Activated naive CD4-positive, alpha-beta T cell treated with anti-CD3 and anti-CD28 coated beads for 36 hours (primary cell): ENCODE measurements at regions of chr11 and their contacts with region 1.

Region 1: GRCh38 chr11:119205574-119206510 is at the start of gene CBL:
- DNase-seq: peak; percentile 99
- H3K4me3 Mint-ChIP-seq: peak within 1 kb of the TSS; percentile 93
- H3K27ac Mint-ChIP-seq: peak within 1 kb of the TSS; percentile 88
- H3K4me1 Mint-ChIP-seq: peaks cover 29% of the 10 kb centered on the region
- H3K27me3 Mint-ChIP-seq: no peaks in the 10 kb centered on the region
- total RNA-seq, gene CBL: 25.3 to 25.7 TPM

Region 2: GRCh38 chr11:117327567-117328374 is 1878.1 kb before region 1 on chr11 and contains the start of gene CEP164:
- CTCF ChIA-PET with region 1: no interaction called
- intact Hi-C with region 1: loop called (anchors 5 kb)
- DNase-seq: peak; percentile 97
- H3K4me3 Mint-ChIP-seq: peak within 1 kb of the TSS; percentile 61
- H3K27ac Mint-ChIP-seq: peak within 1 kb of the TSS; percentile 71
- H3K4me1 Mint-ChIP-seq: peaks cover 3% of the 10 kb centered on the region
- H3K27me3 Mint-ChIP-seq: no peaks in the 10 kb centered on the region
- total RNA-seq, gene CEP164: 23.9 to 24.6 TPM

Region 3: GRCh38 chr11:118572061-118572980 is 633.5 kb before region 1 on chr11 and contains the start of gene ARCN1:
- CTCF ChIA-PET with region 1: no interaction called
- intact Hi-C with region 1: no loop called
- DNase-seq: peak; percentile 84
- H3K4me3 Mint-ChIP-seq: peak within 1 kb of the TSS; percentile 91
- H3K27ac Mint-ChIP-seq: peak within 1 kb of the TSS; percentile 94
- H3K4me1 Mint-ChIP-seq: peaks cover 54% of the 10 kb centered on the region
- H3K27me3 Mint-ChIP-seq: no peaks in the 10 kb centered on the region
- total RNA-seq, gene ARCN1: 159 to 174 TPM

Region 4: DNA sequence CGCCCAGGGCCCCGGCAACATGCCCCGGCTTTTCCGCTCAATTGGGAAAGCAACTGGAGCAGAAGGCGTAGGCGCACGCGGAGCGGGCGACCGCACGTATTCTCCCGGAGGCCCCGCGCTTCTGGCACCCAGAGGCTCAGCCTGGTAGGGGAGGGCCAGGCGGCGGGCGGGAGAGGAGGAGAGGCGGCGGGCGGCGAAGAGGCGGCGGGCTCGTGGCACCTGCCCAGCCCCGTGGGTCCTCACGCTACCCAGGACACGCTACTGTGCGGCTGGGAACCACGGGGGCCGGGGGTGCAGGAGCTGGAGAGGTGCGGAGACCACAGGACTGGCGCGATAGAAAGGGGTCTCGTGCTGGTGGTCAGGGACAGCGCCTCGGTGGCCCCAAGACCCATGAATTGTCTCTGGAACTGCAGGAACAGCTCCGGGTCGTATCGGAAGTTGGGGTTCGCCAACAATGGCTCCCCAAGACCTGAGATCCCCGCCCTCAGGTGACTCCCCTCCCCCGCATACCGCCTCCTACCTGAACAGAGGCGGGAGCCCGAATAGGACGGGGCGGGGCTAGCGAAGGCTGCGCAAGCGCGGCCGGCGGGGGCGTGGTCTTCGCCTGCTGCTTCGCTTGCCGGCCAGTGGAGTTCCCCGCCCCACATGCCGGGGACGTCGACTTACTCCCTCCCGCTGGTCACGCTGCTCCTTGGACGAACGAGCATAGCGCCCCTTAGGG is 175.4 kb before region 1 on chr11 and contains the start of gene SLC37A4:
- CTCF ChIA-PET with region 1: no interaction called
- intact Hi-C with region 1: loop called (anchors 1 kb)
- DNase-seq: peak; percentile 99
- H3K4me3 Mint-ChIP-seq: peak within 1 kb of the TSS; percentile 77
- H3K27ac Mint-ChIP-seq: peak within 1 kb of the TSS; percentile 85
- H3K4me1 Mint-ChIP-seq: peaks cover 23% of the 10 kb centered on the region
- H3K27me3 Mint-ChIP-seq: no peaks in the 10 kb centered on the region
- total RNA-seq, gene SLC37A4: 28.3 to 30.3 TPM

Region 5: GRCh38 chr11:119168471-119169281 is 37.2 kb before region 1 on chr11 and contains the start of gene NLRX1:
- CTCF ChIA-PET with region 1: interaction called, 6 read pairs
- intact Hi-C with region 1: loop called (anchors 2 kb)
- DNase-seq: peak; percentile 92
- H3K4me3 Mint-ChIP-seq: peak within 1 kb of the TSS; percentile 92
- H3K27ac Mint-ChIP-seq: peak within 1 kb of the TSS; percentile 82
- H3K4me1 Mint-ChIP-seq: peaks cover 6% of the 10 kb centered on the region
- H3K27me3 Mint-ChIP-seq: no peaks in the 10 kb centered on the region
- total RNA-seq, gene NLRX1: 20.8 to 22.2 TPM

Region 6: DNA sequence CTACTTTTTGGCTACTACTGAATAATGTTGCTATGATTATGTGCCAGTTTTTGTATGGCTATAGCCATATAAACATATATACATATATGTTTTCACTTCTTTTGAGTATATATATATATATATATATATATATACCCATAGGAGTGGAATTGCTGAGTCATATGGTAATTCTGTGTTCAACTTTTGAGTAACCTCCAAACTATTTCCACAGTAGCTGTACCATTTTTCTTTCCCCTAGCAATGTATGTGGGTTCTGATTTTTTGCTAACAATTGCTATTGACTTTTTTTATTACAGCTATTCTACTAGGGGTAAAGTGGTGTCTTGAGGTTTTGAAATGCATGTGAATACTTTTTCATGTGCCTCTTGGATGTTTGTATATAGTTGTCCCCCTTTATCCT is 30.6 kb after region 1 on chr11:
- CTCF ChIA-PET with region 1: interaction called, 3 read pairs
- intact Hi-C with region 1: loop called (anchors 2 kb)
- DNase-seq: no peak
- H3K4me3 Mint-ChIP-seq: no peak overlapping the region
- H3K27ac Mint-ChIP-seq: no peak overlapping the region
- H3K4me1 Mint-ChIP-seq: peaks cover 49% of the 10 kb centered on the region
- H3K27me3 Mint-ChIP-seq: no peaks in the 10 kb centered on the region

Region 7: DNA sequence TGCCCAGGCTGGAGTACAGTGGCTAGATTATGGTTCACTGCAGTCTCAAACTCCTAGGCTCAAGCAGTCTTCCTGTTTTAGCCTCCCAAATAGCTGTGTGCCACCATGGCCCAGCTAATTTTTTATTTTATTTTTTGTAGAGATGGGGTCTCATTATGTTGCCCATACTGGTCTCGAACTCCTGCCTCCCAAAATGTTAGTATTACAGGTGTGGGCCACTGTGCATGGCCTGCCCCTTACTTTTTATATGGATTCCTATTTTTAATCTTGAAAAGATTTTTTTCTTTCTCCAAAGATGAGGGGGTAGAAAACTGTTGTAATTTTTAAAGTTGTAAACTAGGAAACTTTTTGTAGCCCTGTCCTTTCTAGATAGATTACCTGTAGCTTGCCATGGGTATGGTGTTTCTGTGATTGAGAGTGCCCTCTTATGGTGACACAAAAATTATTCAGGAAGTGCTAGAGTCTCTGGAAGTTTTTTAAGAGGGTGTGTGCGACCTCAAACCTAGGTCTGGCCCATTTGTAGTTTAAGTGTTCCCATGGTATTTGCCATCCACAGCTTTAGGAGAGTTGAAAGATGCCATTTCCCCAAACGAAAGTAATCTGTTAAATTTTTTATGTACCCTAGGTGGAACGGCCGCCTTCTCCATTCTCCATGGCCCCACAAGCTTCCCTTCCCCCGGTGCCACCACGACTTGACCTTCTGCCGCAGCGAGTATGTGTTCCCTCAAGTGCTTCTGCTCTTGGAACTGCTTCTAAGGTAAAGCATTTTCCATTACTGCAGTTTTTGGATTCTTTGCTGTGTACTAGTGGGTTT is 78.7 kb after region 1 on chr11:
- CTCF ChIA-PET with region 1: interaction called, 63 read pairs
- intact Hi-C with region 1: loop called (anchors 1 kb)
- DNase-seq: peak; percentile 29
- H3K4me3 Mint-ChIP-seq: no peak overlapping the region
- H3K27ac Mint-ChIP-seq: no peak overlapping the region
- H3K4me1 Mint-ChIP-seq: peaks cover 16% of the 10 kb centered on the region
- H3K27me3 Mint-ChIP-seq: no peaks in the 10 kb centered on the region